ENCODE measurements at regions of chr7 and their contacts with region 1.

Region 1: GRCh38 chr7:100852048-100852872 is at the start of gene SLC12A9:
- DNase-seq: peak; percentile 100
- H3K4me3 ChIP-seq: peak within 1 kb of the TSS; percentile 62 to 87
- H3K27ac ChIP-seq: peak within 1 kb of the TSS in 1 of 2 experiments; percentile 3; a peak in 1 of 4 replicates
- H3K4me1 ChIP-seq: peaks cover 7% of the 10 kb centered on the region in 2 experiments; a peak in 2 of 4 replicates
- H3K27me3 ChIP-seq: no peaks in the 10 kb centered on the region
- CTCF ChIP-seq: peak; percentile 99
- EP300 ChIP-seq: no peak; a peak in 1 of 4 replicates
- RAD21 ChIP-seq: peak; percentile 99
- polyA plus RNA-seq, gene SLC12A9: 29.7 and 31.0 TPM in 2 replicates

Region 2: DNA sequence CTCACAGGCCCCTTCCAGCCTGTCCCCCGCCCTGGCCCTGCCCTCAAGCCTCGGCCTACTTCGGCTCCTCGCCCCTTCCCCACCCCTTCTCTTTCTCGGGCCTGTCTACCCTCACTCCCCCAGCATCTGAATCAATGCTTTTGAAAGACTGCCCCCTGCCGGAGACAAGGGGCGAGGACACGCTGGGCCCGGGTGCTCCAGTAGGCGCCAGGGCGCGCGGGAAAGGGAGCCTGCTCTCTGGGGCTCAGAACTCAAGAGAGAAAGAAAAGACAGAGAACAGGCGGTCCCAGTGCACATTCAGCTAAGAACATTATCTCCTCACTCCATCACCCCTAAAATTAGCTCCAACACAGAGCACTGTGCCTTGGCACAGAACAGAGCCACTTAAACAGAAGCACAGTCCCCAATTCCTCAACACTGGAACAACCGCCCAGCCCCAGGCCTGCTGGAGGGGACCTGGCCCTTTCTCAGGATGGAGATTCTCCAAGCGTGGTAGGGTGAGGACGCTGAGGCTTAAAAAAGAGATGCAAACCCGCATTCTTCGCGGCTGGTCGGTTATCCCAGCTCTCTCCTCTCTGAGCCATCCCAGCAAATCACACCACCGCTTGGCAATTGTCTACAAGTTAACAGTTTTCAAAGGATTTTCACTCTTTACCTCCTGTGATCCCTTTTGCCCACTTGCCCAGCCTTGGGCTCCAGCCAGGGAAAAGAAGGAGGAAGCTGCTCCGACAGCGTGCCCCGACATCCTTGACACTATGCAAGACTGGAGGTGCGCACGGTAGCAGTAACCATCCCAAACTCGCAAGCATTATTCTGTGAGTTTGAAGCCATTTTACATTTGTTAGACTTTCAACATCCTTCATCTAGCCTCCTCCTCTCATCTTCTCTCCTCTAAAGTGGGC is 160.3 kb before region 1 on chr7:
- CTCF ChIA-PET with region 1: interaction called, 46 read pairs
- POLR2A ChIA-PET with region 1: no interaction called
- DNase-seq: peak; percentile 98
- H3K4me3 ChIP-seq: peak overlapping the region; percentile 66 to 87
- H3K27ac ChIP-seq: peak overlapping the region in 1 of 2 experiments; percentile 43; a peak in 2 of 4 replicates
- H3K4me1 ChIP-seq: peaks cover 18 to 23% of the 10 kb centered on the region in 2 experiments
- H3K27me3 ChIP-seq: no peaks in the 10 kb centered on the region
- CTCF ChIP-seq: peak; percentile 98
- EP300 ChIP-seq: no peak
- RAD21 ChIP-seq: peak; percentile 89

Region 3: GRCh38 chr7:100726996-100727761 is 125.1 kb before region 1 on chr7:
- CTCF ChIA-PET with region 1: interaction called, 36 read pairs
- POLR2A ChIA-PET with region 1: no interaction called
- DNase-seq: no peak
- H3K4me3 ChIP-seq: no peak overlapping the region
- H3K27ac ChIP-seq: no peak overlapping the region
- H3K4me1 ChIP-seq: no peaks in the 10 kb centered on the region; a peak in 1 of 4 replicates
- H3K27me3 ChIP-seq: peaks cover 4% of the 10 kb centered on the region; the same call in 1 of the 2 replicates
- CTCF ChIP-seq: no peak
- EP300 ChIP-seq: no peak
- RAD21 ChIP-seq: no peak

Region 4: GRCh38 chr7:100781255-100781654 is 71.0 kb before region 1 on chr7:
- CTCF ChIA-PET with region 1: interaction called, 10 read pairs
- POLR2A ChIA-PET with region 1: no interaction called
- DNase-seq: peak; percentile 30
- H3K4me3 ChIP-seq: no peak overlapping the region
- H3K27ac ChIP-seq: no peak overlapping the region
- H3K4me1 ChIP-seq: no peaks in the 10 kb centered on the region
- H3K27me3 ChIP-seq: peaks cover 23% of the 10 kb centered on the region
- CTCF ChIP-seq: no peak
- EP300 ChIP-seq: no peak
- RAD21 ChIP-seq: no peak

Region 5: DNA sequence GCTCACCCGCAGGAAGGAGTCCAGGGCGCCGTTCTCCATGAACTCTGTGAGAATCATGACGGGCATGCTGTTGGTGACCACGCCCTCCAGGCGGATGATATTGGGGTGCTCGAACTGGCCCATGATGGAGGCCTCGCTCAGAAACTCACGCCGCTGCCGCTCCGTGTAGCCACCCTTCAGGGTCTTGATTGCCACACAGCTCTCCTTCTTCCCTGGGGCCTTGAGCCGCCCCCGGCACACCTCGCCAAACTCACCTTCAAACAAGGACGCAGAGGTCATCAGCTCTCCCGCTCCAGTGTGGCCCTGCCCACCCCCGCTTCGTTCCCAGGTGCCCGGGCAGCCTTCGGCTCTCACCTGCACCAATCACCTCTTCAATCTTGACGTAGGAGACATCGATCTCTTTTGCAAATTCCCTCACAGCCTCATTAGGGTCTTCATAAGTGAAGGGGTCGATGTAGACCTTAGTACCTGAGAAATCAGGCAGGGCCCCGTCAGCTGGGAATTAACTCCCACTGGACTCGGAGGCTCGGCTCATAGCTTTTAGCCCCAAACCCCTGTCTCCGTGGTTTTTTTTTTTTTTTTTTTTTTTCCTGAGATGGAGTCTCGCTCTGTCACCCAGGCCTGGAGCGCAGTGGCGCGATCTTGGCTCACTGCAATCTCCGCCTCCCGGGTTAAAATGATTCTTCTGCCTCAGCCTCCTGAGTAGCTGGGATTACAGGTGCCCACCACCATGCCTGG is 39.4 kb before region 1 on chr7:
- CTCF ChIA-PET with region 1: interaction called, 398 read pairs
- POLR2A ChIA-PET with region 1: no interaction called
- DNase-seq: no peak
- H3K4me3 ChIP-seq: no peak overlapping the region
- H3K27ac ChIP-seq: no peak overlapping the region
- H3K4me1 ChIP-seq: no peaks in the 10 kb centered on the region
- H3K27me3 ChIP-seq: no peaks in the 10 kb centered on the region
- CTCF ChIP-seq: no peak
- EP300 ChIP-seq: no peak
- RAD21 ChIP-seq: no peak

Region 6: GRCh38 chr7:100865277-100865911 is 13.1 kb after region 1 on chr7:
- CTCF ChIA-PET with region 1: interaction called, 17 read pairs
- POLR2A ChIA-PET with region 1: interaction called, 6 read pairs
- DNase-seq: peak; percentile 39
- H3K4me3 ChIP-seq: no peak overlapping the region
- H3K27ac ChIP-seq: no peak overlapping the region
- H3K4me1 ChIP-seq: peaks cover 2 to 19% of the 10 kb centered on the region in 2 experiments; a peak in 3 of 4 replicates
- H3K27me3 ChIP-seq: no peaks in the 10 kb centered on the region
- CTCF ChIP-seq: no peak
- EP300 ChIP-seq: no peak
- RAD21 ChIP-seq: no peak

Region 7: GRCh38 chr7:101250324-101250723 is 398.1 kb after region 1 on chr7:
- CTCF ChIA-PET with region 1: no interaction called
- POLR2A ChIA-PET with region 1: no interaction called
- DNase-seq: no peak
- H3K4me3 ChIP-seq: 0 out of 4 replicates have a peak overlapping the region, but pooled peaks of 1 of the 2 experiments have one; percentile 89
- H3K27ac ChIP-seq: no peak overlapping the region
- H3K4me1 ChIP-seq: peaks cover 0 to 10% of the 10 kb centered on the region in 2 experiments; a peak in 1 of 4 replicates
- H3K27me3 ChIP-seq: 0 out of 2 replicates have a peak, but pooled peaks cover 4% of the 10 kb centered on the region
- CTCF ChIP-seq: no peak
- EP300 ChIP-seq: no peak
- RAD21 ChIP-seq: no peak